MCF 10A (cell line): ENCODE measurements at regions of chr16 and their contacts with region 1.

Region 1: GRCh38 chr16:87393680-87394055 is 1.5 kb downstream of the MAP1LC3B start:
- DNase-seq: no peak
- H3K4me3 Mint-ChIP-seq: peak overlapping the region; percentile 79
- H3K27ac Mint-ChIP-seq: peak overlapping the region; percentile 75
- H3K4me1 Mint-ChIP-seq: peaks cover 20% of the 10 kb centered on the region
- H3K27me3 Mint-ChIP-seq: no peaks in the 10 kb centered on the region
- CTCF ChIP-seq: no peak

Region 2: GRCh38 chr16:87316923-87317749 is 76.5 kb before region 1 on chr16 and contains the start of gene C16orf95:
- CTCF ChIA-PET with region 1: interaction called, 13 read pairs
- POLR2A ChIA-PET with region 1: interaction called, 21 read pairs
- intact Hi-C with region 1: loop called (anchors 2 kb)
- DNase-seq: peak; percentile 95
- H3K4me3 Mint-ChIP-seq: peak within 1 kb of the TSS; percentile 83
- H3K27ac Mint-ChIP-seq: peak within 1 kb of the TSS; percentile 93
- H3K4me1 Mint-ChIP-seq: peaks cover 6% of the 10 kb centered on the region
- H3K27me3 Mint-ChIP-seq: no peaks in the 10 kb centered on the region
- CTCF ChIP-seq: peak; percentile 50
- total RNA-seq, gene C16orf95: 5.7 and 5.8 TPM in 2 replicates

Region 3: GRCh38 chr16:87324411-87325275 is 69.0 kb before region 1 on chr16:
- CTCF ChIA-PET with region 1: no interaction called
- POLR2A ChIA-PET with region 1: interaction called, 9 read pairs
- intact Hi-C with region 1: loop called (anchors 2 kb)
- DNase-seq: peak; percentile 22
- H3K4me3 Mint-ChIP-seq: no peak overlapping the region
- H3K27ac Mint-ChIP-seq: no peak overlapping the region
- H3K4me1 Mint-ChIP-seq: peaks cover 8% of the 10 kb centered on the region
- H3K27me3 Mint-ChIP-seq: no peaks in the 10 kb centered on the region
- CTCF ChIP-seq: peak; percentile 83

Region 4: DNA sequence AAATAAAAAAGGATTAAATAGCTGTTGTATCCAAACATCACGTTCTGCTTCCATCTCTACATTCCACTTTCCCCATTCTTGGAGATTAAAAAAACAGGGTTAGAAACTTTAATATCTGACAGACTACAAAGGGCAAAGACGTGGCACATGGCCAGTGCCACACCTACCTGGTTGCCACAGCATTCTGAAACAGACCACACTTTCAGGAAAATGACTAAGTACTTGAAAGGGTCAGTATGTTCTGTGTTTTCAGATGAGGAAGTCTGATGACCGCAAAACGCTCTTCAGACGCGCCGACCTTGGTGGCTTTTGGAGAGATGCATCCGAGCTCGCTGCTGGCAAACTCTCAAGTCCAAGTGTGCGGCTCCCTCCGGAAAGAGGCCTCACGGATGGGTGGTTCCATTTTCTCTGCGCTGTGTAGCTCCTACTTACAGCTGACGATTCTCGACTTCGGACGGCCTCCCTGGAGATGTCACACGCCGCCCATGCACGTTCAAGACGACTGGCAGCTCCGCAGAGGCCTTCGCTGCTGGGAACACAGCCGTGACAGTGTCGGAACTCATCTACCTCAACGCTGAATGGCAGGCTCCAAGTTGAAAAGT is 13.9 kb after region 1 on chr16:
- CTCF ChIA-PET with region 1: interaction called, 3 read pairs
- POLR2A ChIA-PET with region 1: interaction called, 15 read pairs
- intact Hi-C with region 1: no loop called
- DNase-seq: peak; percentile 94
- H3K4me3 Mint-ChIP-seq: no peak overlapping the region
- H3K27ac Mint-ChIP-seq: peak overlapping the region; percentile 43
- H3K4me1 Mint-ChIP-seq: peaks cover 14% of the 10 kb centered on the region
- H3K27me3 Mint-ChIP-seq: no peaks in the 10 kb centered on the region
- CTCF ChIP-seq: no peak